IMR-90 (cell line): ENCODE measurements at regions of chr4 and their contacts with region 1.

Region 1: DNA sequence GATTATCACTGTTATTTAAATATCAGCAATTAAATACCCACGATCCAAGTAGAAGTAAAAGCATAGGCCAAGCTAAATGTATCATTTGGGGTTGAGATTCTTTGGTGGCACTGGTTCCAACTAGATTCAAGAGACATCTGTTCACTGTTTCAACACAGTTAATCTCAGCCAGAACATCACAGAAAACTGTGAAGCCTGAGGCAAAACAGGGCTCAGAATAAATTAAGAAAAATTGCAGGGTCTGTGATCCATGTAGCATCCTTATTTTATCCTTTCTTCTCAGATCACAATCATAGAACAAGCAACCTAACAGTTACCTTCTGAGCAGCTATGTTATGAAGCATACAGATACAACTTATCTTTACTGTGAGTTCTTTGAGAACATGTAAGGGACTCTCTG is 23.7 kb downstream of the YTHDC1 start:
- DNase-seq: no peak
- ATAC-seq: no peak
- H3K4me3 ChIP-seq: no peak overlapping the region
- H3K27ac ChIP-seq: no peak overlapping the region
- H3K4me1 ChIP-seq: no peaks in the 10 kb centered on the region; the same call in 1 of the 2 replicates
- H3K27me3 ChIP-seq: no peaks in the 10 kb centered on the region
- CTCF ChIP-seq: no peak
- POLR2A ChIP-seq: no peak
- RAD21 ChIP-seq: no peak

Region 2: DNA sequence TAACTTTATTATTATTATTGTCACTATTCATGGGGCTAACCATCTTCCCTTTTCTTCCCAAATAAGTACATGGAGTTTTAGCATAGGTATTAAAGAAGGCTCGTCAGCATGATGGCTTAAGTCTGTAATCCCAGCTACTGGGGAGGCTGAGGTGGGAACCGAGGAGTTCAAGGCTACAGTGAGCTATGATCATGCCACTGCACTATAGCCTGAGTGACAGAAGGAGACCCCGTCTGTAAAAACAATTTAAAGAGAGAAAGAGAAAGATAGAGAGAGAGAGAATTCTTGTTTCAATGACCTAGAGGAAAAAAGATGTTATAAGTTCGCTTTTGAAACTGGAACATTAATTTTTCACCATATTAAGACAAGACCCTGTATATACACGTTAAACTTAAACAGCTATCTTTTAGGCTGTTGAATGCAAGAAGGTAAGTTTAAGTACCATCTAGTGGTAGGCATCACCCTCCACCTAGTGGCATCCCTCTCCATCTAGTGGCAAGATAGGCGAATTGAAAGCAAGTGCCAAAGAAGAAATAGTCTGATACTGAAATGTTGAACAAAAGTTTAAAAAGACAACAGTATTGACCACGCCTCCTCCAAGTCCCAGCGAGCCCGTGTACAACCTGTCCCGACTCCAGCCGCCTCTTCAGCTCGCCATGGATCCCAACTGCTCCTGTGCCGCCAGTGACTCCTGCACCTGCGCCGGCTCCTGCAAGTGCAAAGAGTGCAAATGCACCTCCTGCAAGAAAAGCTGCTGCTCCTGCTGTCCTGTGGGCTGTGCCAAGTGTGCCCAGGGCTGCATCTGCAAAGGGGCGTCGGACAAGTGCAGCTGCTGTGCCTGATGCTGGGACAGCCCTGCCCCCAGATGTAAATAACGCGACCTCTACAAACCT is 49.8 kb after region 1 on chr4:
- CTCF ChIA-PET with region 1: interaction called, 5 read pairs
- POLR2A ChIA-PET with region 1: no interaction called
- dilution Hi-C with region 1: no loop called
- in situ Hi-C with region 1: no loop called
- intact Hi-C with region 1: loop called (anchors 5 kb)
- DNase-seq: peak; percentile 64
- ATAC-seq: peak; percentile 77
- H3K4me3 ChIP-seq: no peak overlapping the region
- H3K27ac ChIP-seq: no peak overlapping the region
- H3K4me1 ChIP-seq: peaks cover 9% of the 10 kb centered on the region
- H3K27me3 ChIP-seq: no peaks in the 10 kb centered on the region
- CTCF ChIP-seq: peak; percentile 96
- POLR2A ChIP-seq: no peak
- RAD21 ChIP-seq: peak; percentile 91